CD14-positive monocyte (primary cell): ENCODE measurements at regions of chr4 and their contacts with region 1.

Region 1: DNA sequence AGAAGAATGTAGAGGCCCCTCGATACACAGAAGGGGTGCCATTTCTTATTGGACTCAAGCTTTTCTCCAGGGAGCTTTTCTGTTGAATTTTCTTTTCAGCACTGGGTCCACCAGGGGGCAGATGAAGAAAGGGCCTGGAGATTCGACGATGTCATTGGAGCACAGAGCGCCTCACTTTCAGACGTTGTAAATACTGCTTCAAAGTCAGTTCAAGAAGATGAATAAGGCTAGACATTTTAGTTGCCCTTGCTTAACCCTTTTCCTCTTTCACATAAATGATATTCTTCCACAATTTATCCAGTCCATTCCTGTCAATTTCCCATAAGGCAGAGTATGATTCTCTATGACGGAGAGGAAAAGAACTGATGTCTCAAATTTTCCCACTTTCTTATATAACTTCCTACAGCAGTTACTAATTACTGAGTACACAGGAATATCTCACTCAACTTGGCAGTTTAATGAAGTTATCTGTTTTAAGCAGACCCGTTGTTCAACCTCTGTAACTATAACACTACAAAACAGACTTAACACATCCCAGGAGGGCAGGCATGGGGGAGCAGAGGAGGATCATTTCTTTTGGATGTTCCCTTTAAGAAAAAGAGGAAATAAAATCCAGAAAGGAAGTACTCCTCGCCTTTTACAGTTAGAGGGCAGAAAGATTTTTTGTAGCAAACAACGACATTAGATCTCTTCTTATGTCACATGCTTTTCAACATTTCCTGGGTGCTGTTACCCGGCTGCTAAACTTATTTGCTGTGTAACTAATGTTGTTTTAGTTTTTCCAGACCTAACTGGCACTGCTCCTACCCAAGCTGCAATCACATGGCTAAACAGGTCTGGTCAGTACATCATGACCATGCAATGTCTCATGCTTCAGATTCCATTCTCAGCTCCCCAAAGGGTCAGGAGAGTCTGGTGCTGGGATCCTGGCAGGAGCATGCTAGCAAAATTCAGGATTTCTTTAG is 12.2 kb upstream of the CENPU start:
- DNase-seq: peak; percentile 60 to 64 (median 62)
- H3K4me3 ChIP-seq: peak overlapping the region; percentile 4 to 64 (median 21)
- H3K4me3 Mint-ChIP-seq: peak overlapping the region; percentile 34 to 85
- H3K27ac ChIP-seq: peak overlapping the region; percentile 74 to 80
- H3K27ac Mint-ChIP-seq: peak overlapping the region; percentile 84 to 94 (median 93)
- H3K4me1 ChIP-seq: peaks cover 34 to 42% of the 10 kb centered on the region in 2 donors
- H3K4me1 Mint-ChIP-seq: peaks cover 51% of the 10 kb centered on the region
- H3K27me3 ChIP-seq: no peaks in the 10 kb centered on the region
- H3K27me3 Mint-ChIP-seq: peaks cover 0 to 4% (median 0%) of the 10 kb centered on the region in 3 donors
- CTCF ChIP-seq: peak; percentile 77

Region 2: DNA sequence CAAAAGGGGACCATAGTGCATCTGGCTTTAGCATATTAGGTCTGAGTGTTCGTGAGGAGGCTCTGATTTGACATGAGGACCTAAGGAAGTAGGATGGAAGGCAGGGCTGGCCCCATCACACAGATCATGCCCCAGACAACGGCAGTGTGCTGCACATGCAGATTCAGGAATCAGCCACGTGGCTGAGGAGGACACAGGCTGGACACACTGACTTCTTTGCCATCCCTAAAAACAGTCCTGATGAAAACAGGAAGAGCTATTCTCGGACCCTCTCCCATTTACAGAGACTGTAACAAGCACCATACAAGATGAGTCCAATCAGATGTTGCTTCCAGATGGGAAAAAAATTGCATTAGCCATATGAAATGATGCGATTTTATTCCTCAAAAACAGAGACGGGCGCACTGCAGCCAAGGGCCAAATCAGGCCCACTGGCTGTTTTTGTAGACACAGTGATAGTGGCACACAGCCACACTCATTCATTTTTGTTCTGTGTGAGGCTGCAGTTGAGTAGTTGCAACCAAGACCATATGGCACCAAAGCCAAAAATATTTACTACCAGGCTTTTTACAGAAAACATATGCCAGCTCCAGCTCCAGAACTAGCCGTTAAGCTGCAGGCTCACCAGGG is 38.6 kb after region 1 on chr4:
- intact Hi-C with region 1: loop called in 1 of 2 experiments (anchors 5 kb)
- DNase-seq: no peak
- H3K4me3 ChIP-seq: no peak overlapping the region
- H3K4me3 Mint-ChIP-seq: no peak overlapping the region
- H3K27ac ChIP-seq: no peak overlapping the region
- H3K27ac Mint-ChIP-seq: peak overlapping the region in 1 of 7 donors; percentile 4
- H3K4me1 ChIP-seq: peaks cover 25 to 29% of the 10 kb centered on the region in 2 donors
- H3K4me1 Mint-ChIP-seq: peaks cover 33% of the 10 kb centered on the region
- H3K27me3 ChIP-seq: no peaks in the 10 kb centered on the region
- H3K27me3 Mint-ChIP-seq: no peaks in the 10 kb centered on the region
- CTCF ChIP-seq: no peak

Region 3: DNA sequence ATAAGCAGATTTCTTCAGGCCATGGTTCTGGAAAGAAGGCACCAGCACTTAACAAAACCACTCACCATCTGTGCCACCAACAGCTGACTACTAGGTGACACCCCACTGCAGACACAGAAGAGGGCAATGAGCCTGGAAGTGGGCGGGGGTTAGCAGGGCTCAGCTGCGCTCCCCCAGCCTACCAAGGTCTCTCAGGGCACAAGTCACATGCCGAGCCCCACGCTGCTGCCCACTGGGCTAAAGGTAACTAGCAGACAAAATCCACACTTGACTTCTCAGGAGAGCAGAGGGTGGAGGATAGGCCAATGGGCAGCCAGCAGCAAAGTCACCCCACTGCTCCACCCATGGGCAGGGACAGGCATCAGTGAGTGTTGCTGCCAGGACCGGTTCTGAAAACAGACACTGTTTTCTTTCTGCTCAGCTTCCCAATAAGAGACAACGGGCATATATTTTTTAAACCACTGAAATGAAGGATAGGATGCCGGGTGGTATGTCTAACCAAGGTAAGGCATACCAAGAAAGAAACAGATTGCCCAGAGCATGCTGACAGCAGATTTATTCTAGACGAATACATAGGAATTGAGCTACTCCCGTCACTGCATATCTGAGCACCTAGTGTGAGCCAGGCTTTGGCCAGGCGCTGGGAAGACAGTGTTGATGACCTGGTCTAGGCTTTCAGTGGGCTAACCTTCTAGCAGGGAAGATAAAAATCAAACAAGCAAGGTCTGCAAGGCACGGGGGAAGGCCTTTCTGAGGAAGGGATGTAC is 59.5 kb after region 1 on chr4:
- intact Hi-C with region 1: loop called in 1 of 2 experiments (anchors 10 kb)
- DNase-seq: no peak
- H3K4me3 ChIP-seq: no peak overlapping the region
- H3K4me3 Mint-ChIP-seq: no peak overlapping the region
- H3K27ac ChIP-seq: no peak overlapping the region
- H3K27ac Mint-ChIP-seq: peak overlapping the region in 3 of 7 donors; percentile 22 to 73 (median 60)
- H3K4me1 ChIP-seq: peaks cover 7 to 44% of the 10 kb centered on the region in 2 donors
- H3K4me1 Mint-ChIP-seq: peaks cover 56% of the 10 kb centered on the region
- H3K27me3 ChIP-seq: no peaks in the 10 kb centered on the region
- H3K27me3 Mint-ChIP-seq: peaks cover 0 to 2% (median 0%) of the 10 kb centered on the region in 3 donors
- CTCF ChIP-seq: no peak

Region 4: DNA sequence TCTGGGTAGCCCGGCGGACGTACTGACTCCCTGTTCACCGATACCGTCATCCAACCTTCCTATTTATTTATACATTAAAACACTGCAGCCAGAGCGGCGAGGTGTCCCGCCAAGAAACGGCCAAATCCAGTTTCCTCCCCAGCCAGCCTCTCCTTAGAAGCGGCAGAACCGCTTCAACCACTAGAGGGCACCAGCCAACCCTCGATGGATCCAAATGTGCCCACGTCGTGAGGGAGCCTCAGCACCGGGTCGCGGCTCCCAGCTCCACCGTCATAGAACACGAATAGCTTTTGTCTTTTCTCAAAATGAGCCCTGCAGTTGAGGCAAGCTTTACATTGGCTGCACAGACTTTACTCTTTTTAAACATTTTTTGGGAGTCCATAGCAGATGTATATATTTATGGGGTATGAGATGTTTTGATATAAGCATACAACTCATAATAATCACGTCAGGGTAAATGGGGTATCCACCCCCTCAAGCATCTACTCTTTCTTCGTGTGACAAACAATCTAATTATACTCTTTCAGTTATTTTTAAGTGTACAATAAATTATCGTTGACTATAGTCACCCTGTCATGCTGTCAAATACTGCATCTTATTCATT is 259.2 kb after region 1 on chr4:
- intact Hi-C with region 1: loop called in 1 of 2 experiments (anchors 10 kb)
- DNase-seq: peak; percentile 68 to 78 (median 74)
- H3K4me3 ChIP-seq: peak overlapping the region in 1 of 3 experiments; percentile 45
- H3K4me3 Mint-ChIP-seq: peak overlapping the region; percentile 71 to 86
- H3K27ac ChIP-seq: no peak overlapping the region
- H3K27ac Mint-ChIP-seq: peak overlapping the region in 3 of 7 donors; percentile 28 to 60 (median 30)
- H3K4me1 ChIP-seq: peaks cover 9 to 13% of the 10 kb centered on the region in 2 donors
- H3K4me1 Mint-ChIP-seq: peaks cover 22% of the 10 kb centered on the region
- H3K27me3 ChIP-seq: peaks cover 0 to 13% of the 10 kb centered on the region in 2 donors
- H3K27me3 Mint-ChIP-seq: peaks cover 29 to 42% (median 38%) of the 10 kb centered on the region in 3 donors
- CTCF ChIP-seq: peak; percentile 95

Region 5: GRCh38 chr4:185405296-185405999 is 659.3 kb after region 1 on chr4:
- intact Hi-C with region 1: no loop called
- DNase-seq: peak; percentile 40 to 61 (median 50)
- H3K4me3 ChIP-seq: no peak overlapping the region
- H3K4me3 Mint-ChIP-seq: no peak overlapping the region
- H3K27ac ChIP-seq: peak overlapping the region in 1 of 2 donors; percentile 70
- H3K27ac Mint-ChIP-seq: peak overlapping the region; percentile 66 to 85 (median 73)
- H3K4me1 ChIP-seq: peaks cover 4 to 5% of the 10 kb centered on the region in 2 donors
- H3K4me1 Mint-ChIP-seq: peaks cover 12% of the 10 kb centered on the region
- H3K27me3 ChIP-seq: no peaks in the 10 kb centered on the region
- H3K27me3 Mint-ChIP-seq: no peaks in the 10 kb centered on the region
- CTCF ChIP-seq: no peak